ENCODE measurements at regions of chr6 and their contacts with region 1.

Region 1: DNA sequence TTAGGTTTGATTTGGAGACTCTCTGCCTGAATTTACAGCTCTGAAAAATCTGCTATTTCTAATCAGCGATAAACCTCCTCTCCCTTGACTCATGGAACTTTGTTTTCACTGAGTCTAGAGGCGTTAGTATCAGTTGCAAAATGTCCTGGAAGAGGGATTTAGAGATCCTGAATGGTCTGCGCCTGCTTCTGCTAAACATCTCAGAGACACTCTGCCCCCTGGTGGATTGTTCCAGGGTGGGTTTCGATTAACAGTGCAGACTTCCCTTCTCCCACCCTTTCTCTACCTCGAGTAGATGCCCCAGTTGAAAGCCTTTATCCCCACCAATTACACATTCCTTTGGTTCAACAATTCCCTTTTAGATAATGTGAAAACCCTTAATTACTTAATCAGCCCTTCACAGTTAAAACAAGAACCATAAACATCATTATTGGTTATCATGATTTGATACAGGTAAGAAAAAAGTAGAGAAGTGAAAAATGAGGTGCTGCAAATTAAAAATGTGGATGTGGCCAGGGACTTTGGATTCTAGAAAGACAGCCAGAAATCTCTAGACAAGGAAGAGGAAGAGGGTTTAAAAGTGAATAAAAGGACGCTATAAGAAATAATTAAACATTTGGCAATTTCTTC is 5.5 kb downstream of the HTR1B start:
- DNase-seq: peak; percentile 95
- H3K4me3 Mint-ChIP-seq: no peak overlapping the region
- H3K27ac Mint-ChIP-seq: peak overlapping the region; percentile 4
- H3K4me1 Mint-ChIP-seq: peaks cover 11% of the 10 kb centered on the region
- H3K27me3 Mint-ChIP-seq: no peaks in the 10 kb centered on the region
- CTCF ChIP-seq: peak; percentile 54

Region 2: DNA sequence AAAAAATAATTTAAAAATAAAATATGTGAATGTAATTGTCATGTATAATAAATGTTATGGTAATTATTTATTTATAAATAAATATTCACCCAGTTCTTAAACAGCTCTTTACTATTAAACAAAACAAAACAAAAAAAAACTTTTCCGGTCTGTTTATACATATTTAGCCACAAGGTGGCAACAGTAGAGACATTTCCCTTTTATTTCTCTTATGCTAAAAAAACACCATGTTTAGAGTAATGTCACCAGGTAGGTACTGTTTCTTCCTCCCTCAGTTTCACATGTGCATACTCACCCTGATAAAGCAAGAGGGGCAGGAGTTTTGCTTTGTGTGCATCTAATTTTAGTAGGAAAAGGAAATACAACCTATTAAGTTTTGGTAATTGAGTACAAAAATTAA is 775.0 kb before region 1 on chr6:
- CTCF ChIA-PET with region 1: interaction called, 6 read pairs
- POLR2A ChIA-PET with region 1: interaction called, 6 read pairs
- intact Hi-C with region 1: loop called (anchors 1 kb)
- DNase-seq: peak; percentile 32
- H3K4me3 Mint-ChIP-seq: no peak overlapping the region
- H3K27ac Mint-ChIP-seq: no peak overlapping the region
- H3K4me1 Mint-ChIP-seq: no peaks in the 10 kb centered on the region
- H3K27me3 Mint-ChIP-seq: no peaks in the 10 kb centered on the region
- CTCF ChIP-seq: peak; percentile 36

Region 3: DNA sequence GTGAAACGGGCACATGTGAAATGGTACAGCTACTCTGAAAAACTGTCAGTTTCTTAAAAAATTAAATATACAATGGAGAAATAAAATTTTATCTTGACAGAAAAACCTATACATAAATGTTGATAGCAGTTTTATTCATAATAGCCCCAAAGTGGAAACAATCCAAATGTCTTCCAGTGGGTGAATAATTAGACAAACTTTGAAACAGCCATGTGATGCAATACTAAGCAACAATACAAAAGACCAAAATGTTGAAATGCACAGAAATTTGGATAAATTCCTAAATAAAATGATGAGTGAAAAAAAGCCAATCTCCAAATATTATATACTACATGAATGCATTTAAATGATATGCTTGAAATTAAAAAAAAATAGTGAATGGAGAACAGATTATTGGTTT is 517.6 kb before region 1 on chr6:
- CTCF ChIA-PET with region 1: no interaction called
- POLR2A ChIA-PET with region 1: no interaction called
- intact Hi-C with region 1: loop called (anchors 10 kb)
- DNase-seq: peak; percentile 42
- H3K4me3 Mint-ChIP-seq: no peak overlapping the region
- H3K27ac Mint-ChIP-seq: no peak overlapping the region
- H3K4me1 Mint-ChIP-seq: peaks cover 12% of the 10 kb centered on the region
- H3K27me3 Mint-ChIP-seq: no peaks in the 10 kb centered on the region
- CTCF ChIP-seq: no peak

Region 4: GRCh38 chr6:77548190-77548589 is 90.4 kb after region 1 on chr6:
- CTCF ChIA-PET with region 1: no interaction called
- POLR2A ChIA-PET with region 1: no interaction called
- intact Hi-C with region 1: no loop called
- DNase-seq: no peak
- H3K4me3 Mint-ChIP-seq: no peak overlapping the region
- H3K27ac Mint-ChIP-seq: no peak overlapping the region
- H3K4me1 Mint-ChIP-seq: no peaks in the 10 kb centered on the region
- H3K27me3 Mint-ChIP-seq: no peaks in the 10 kb centered on the region
- CTCF ChIP-seq: no peak

Region 5: GRCh38 chr6:77686931-77687330 is 229.1 kb after region 1 on chr6:
- CTCF ChIA-PET with region 1: no interaction called
- POLR2A ChIA-PET with region 1: no interaction called
- intact Hi-C with region 1: no loop called
- DNase-seq: peak; percentile 11
- H3K4me3 Mint-ChIP-seq: no peak overlapping the region
- H3K27ac Mint-ChIP-seq: no peak overlapping the region
- H3K4me1 Mint-ChIP-seq: no peaks in the 10 kb centered on the region
- H3K27me3 Mint-ChIP-seq: no peaks in the 10 kb centered on the region
- CTCF ChIP-seq: no peak